PC-9 (cell line): ENCODE measurements at regions of chr11 and their contacts with region 1.

Region 1: GRCh38 chr11:3753110-3753509 is 44.2 kb downstream of the NUP98 start:
- DNase-seq: no peak
- H3K4me3 ChIP-seq: no peak overlapping the region
- H3K27ac ChIP-seq: no peak overlapping the region
- H3K4me1 ChIP-seq: peaks cover 4% of the 10 kb centered on the region; the same call in 1 of the 2 replicates
- H3K27me3 ChIP-seq: no peaks in the 10 kb centered on the region
- CTCF ChIP-seq: no peak

Region 2: DNA sequence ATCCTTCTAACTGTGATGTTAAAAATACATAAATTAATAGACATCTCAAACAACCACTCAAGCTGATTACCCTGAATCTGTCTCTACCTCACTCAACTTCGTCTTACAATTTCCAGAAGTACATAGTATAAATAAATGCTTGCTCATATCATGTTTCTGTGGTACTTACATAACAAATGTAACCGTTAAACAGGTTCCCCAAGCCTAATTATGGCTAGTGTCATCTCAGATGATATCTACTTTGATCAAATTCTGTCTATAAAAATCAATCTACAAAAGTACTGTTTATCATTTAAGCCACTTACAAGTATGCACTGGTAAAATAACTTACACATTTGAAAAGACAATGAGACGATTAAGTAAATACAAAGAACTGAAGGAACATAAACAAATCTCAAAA is 53.7 kb before region 1 on chr11:
- CTCF ChIA-PET with region 1: no interaction called
- POLR2A ChIA-PET with region 1: no interaction called
- intact Hi-C with region 1: loop called (anchors 10 kb)
- DNase-seq: no peak
- H3K4me3 ChIP-seq: no peak overlapping the region
- H3K27ac ChIP-seq: no peak overlapping the region
- H3K4me1 ChIP-seq: no peaks in the 10 kb centered on the region
- H3K27me3 ChIP-seq: no peaks in the 10 kb centered on the region
- CTCF ChIP-seq: no peak

Region 3: GRCh38 chr11:3867209-3868091 is 114.3 kb after region 1 on chr11:
- CTCF ChIA-PET with region 1: no interaction called
- POLR2A ChIA-PET with region 1: no interaction called
- intact Hi-C with region 1: no loop called
- DNase-seq: no peak
- H3K4me3 ChIP-seq: no peak overlapping the region
- H3K27ac ChIP-seq: no peak overlapping the region
- H3K4me1 ChIP-seq: peaks cover 19% of the 10 kb centered on the region; the same call in 1 of the 2 replicates
- H3K27me3 ChIP-seq: no peaks in the 10 kb centered on the region
- CTCF ChIP-seq: no peak